CD8-positive, alpha-beta T cell (primary cell): ENCODE measurements at regions of chr5 and their contacts with region 1.

Region 1: DNA sequence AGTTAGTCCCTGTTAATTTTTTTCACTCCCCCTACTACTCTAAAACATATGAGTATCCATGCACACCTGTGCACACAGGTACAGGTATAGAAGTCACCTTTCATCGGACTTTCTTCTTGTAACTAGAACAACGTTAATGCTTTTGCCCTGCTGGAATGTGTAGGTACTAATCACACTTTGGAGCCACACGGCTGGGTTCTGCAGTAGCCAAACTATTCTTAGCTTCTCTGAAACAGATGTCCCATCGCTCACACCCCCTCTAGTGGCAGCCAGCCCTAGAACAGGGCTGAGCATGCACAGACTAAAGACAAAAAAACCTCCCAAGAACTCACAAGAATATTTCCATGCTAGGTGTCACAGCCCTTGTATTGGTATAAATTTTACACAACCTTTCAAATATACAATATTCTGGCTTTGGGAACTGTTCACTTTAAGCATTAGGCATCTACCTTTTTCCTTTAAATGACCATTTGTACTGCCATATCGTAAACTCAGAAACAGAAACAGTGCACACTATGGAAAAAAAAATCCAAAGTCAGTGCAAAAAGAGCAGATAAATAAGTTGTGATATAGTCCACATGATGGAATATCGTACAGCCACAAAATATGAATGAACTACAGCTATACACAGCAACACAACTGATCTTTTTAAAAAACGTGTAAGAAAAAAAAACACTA is 64.0 kb downstream of the RETREG1 start:
- DNase-seq: peak in 8 of 9 experiments; percentile 11 to 63 (median 49)
- ATAC-seq: peak; percentile 86
- H3K4me3 ChIP-seq: no peak overlapping the region
- H3K4me3 Mint-ChIP-seq: no peak overlapping the region
- H3K27ac ChIP-seq: no peak overlapping the region
- H3K27ac Mint-ChIP-seq: no peak overlapping the region
- H3K4me1 ChIP-seq: no peaks in the 10 kb centered on the region
- H3K4me1 Mint-ChIP-seq: peaks cover 54% of the 10 kb centered on the region
- H3K27me3 ChIP-seq: no peaks in the 10 kb centered on the region
- H3K27me3 Mint-ChIP-seq: no peaks in the 10 kb centered on the region
- CTCF ChIP-seq: peak; percentile 73

Region 2: GRCh38 chr5:16364910-16365309 is 187.9 kb before region 1 on chr5:
- CTCF ChIA-PET with region 1: no interaction called
- POLR2A ChIA-PET with region 1: no interaction called
- intact Hi-C with region 1: no loop called
- DNase-seq: no peak
- ATAC-seq: no peak
- H3K4me3 ChIP-seq: no peak overlapping the region
- H3K4me3 Mint-ChIP-seq: no peak overlapping the region
- H3K27ac ChIP-seq: no peak overlapping the region
- H3K27ac Mint-ChIP-seq: no peak overlapping the region
- H3K4me1 ChIP-seq: no peaks in the 10 kb centered on the region
- H3K4me1 Mint-ChIP-seq: no peaks in the 10 kb centered on the region
- H3K27me3 ChIP-seq: no peaks in the 10 kb centered on the region
- H3K27me3 Mint-ChIP-seq: peaks cover 6% of the 10 kb centered on the region
- CTCF ChIP-seq: no peak

Region 3: GRCh38 chr5:16480821-16481538 is 71.8 kb before region 1 on chr5:
- CTCF ChIA-PET with region 1: no interaction called
- POLR2A ChIA-PET with region 1: no interaction called
- intact Hi-C with region 1: loop called (anchors 5 kb)
- DNase-seq: no peak
- ATAC-seq: no peak
- H3K4me3 ChIP-seq: no peak overlapping the region
- H3K4me3 Mint-ChIP-seq: no peak overlapping the region
- H3K27ac ChIP-seq: no peak overlapping the region
- H3K27ac Mint-ChIP-seq: peak overlapping the region; percentile 28
- H3K4me1 ChIP-seq: no peaks in the 10 kb centered on the region
- H3K4me1 Mint-ChIP-seq: peaks cover 17% of the 10 kb centered on the region
- H3K27me3 ChIP-seq: no peaks in the 10 kb centered on the region
- H3K27me3 Mint-ChIP-seq: no peaks in the 10 kb centered on the region
- CTCF ChIP-seq: no peak

Region 4: GRCh38 chr5:16679863-16680262 is 127.1 kb after region 1 on chr5:
- CTCF ChIA-PET with region 1: no interaction called
- POLR2A ChIA-PET with region 1: no interaction called
- intact Hi-C with region 1: no loop called
- DNase-seq: no peak
- ATAC-seq: no peak
- H3K4me3 ChIP-seq: no peak overlapping the region
- H3K4me3 Mint-ChIP-seq: no peak overlapping the region
- H3K27ac ChIP-seq: no peak overlapping the region
- H3K27ac Mint-ChIP-seq: no peak overlapping the region
- H3K4me1 ChIP-seq: no peaks in the 10 kb centered on the region
- H3K4me1 Mint-ChIP-seq: no peaks in the 10 kb centered on the region
- H3K27me3 ChIP-seq: no peaks in the 10 kb centered on the region
- H3K27me3 Mint-ChIP-seq: peaks cover 10% of the 10 kb centered on the region
- CTCF ChIP-seq: no peak